Common myeloid progenitor, CD34-positive (primary cell): ENCODE measurements at regions of chr12 and their contacts with region 1.

Region 1: GRCh38 chr12:104358347-104359003 is 54.9 kb downstream of the EID3 start:
- DNase-seq: peak; percentile 82 to 92 (median 91)
- H3K4me3 ChIP-seq: no peak overlapping the region
- H3K27ac ChIP-seq: no peak overlapping the region
- H3K4me1 ChIP-seq: no peaks in the 10 kb centered on the region
- H3K27me3 ChIP-seq: no peaks in the 10 kb centered on the region

Region 2: GRCh38 chr12:104011261-104011660 is 347.2 kb before region 1 on chr12:
- CTCF ChIA-PET with region 1: no interaction called
- POLR2A ChIA-PET with region 1: no interaction called
- DNase-seq: no peak
- H3K4me3 ChIP-seq: no peak overlapping the region
- H3K27ac ChIP-seq: no peak overlapping the region
- H3K4me1 ChIP-seq: no peaks in the 10 kb centered on the region
- H3K27me3 ChIP-seq: no peaks in the 10 kb centered on the region

Region 3: DNA sequence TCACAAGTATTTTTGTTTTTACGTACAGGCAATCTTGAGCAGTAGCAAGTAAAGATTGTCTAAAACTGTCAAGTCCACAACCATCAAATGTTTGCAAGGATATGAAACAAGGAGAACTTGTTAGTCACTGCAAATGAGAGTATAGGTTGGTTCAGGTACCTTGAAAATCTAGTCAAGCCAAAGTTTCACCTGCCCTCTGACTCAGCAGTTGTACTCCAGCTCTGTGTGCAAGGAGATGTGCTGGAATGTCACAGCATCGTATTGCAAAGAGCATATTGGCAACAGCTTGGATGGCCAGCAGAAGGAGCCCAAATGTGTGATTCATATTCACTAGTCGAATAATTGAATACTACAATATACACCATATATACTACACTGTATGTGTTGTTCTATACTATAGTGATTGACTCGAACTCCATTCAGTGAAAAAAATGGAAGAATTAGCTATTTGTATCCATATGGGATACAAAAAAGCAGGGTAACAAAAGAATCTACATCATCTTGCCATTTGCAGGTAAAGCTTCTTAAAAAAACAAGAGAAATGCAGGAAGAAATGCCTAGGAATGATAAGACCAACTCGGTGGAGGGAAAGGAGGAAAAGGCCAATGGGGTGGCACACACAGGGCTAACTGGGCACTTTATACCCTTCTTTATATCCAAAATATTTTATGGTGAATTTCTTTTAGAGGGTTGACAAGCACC is 10.9 kb before region 1 on chr12:
- CTCF ChIA-PET with region 1: interaction called, 11 read pairs
- POLR2A ChIA-PET with region 1: no interaction called
- DNase-seq: no peak
- H3K4me3 ChIP-seq: no peak overlapping the region
- H3K27ac ChIP-seq: no peak overlapping the region
- H3K4me1 ChIP-seq: no peaks in the 10 kb centered on the region
- H3K27me3 ChIP-seq: no peaks in the 10 kb centered on the region